ENCODE measurements at regions of chr4 and their contacts with region 1.

Region 1: GRCh38 chr4:79917246-79917645 is 155.8 kb downstream of the ANTXR2 start:
- DNase-seq: peak; percentile 33
- H3K4me3 Mint-ChIP-seq: no peak overlapping the region
- H3K27ac Mint-ChIP-seq: no peak overlapping the region
- H3K4me1 Mint-ChIP-seq: peaks cover 15% of the 10 kb centered on the region
- H3K27me3 Mint-ChIP-seq: peaks cover 5% of the 10 kb centered on the region

Region 2: GRCh38 chr4:80058740-80059139 is 141.5 kb after region 1 on chr4:
- intact Hi-C with region 1: loop called (anchors 5 kb)
- DNase-seq: peak; percentile 41
- H3K4me3 Mint-ChIP-seq: peak overlapping the region; percentile 72
- H3K27ac Mint-ChIP-seq: peak overlapping the region; percentile 94
- H3K4me1 Mint-ChIP-seq: peaks cover 42% of the 10 kb centered on the region
- H3K27me3 Mint-ChIP-seq: no peaks in the 10 kb centered on the region

Region 3: GRCh38 chr4:80215449-80216052 is 298.3 kb after region 1 on chr4:
- intact Hi-C with region 1: loop called (anchors 1 kb)
- DNase-seq: no peak
- H3K4me3 Mint-ChIP-seq: no peak overlapping the region
- H3K27ac Mint-ChIP-seq: no peak overlapping the region
- H3K4me1 Mint-ChIP-seq: peaks cover 1% of the 10 kb centered on the region
- H3K27me3 Mint-ChIP-seq: peaks cover 45% of the 10 kb centered on the region